ENCODE measurements at regions of chr13 and their contacts with region 1.

Region 1: GRCh38 chr13:45310341-45311125 is 30.4 kb downstream of the TPT1 start:
- DNase-seq: no peak
- ATAC-seq: no peak
- H3K4me3 ChIP-seq: peak overlapping the region; percentile 39 to 56 (median 44)
- H3K27ac ChIP-seq: no peak overlapping the region
- H3K4me1 ChIP-seq: peaks cover 4 to 10% of the 10 kb centered on the region in 2 donors
- H3K27me3 ChIP-seq: no peaks in the 10 kb centered on the region
- CTCF ChIP-seq: no peak
- POLR2A ChIP-seq: no peak

Region 2: DNA sequence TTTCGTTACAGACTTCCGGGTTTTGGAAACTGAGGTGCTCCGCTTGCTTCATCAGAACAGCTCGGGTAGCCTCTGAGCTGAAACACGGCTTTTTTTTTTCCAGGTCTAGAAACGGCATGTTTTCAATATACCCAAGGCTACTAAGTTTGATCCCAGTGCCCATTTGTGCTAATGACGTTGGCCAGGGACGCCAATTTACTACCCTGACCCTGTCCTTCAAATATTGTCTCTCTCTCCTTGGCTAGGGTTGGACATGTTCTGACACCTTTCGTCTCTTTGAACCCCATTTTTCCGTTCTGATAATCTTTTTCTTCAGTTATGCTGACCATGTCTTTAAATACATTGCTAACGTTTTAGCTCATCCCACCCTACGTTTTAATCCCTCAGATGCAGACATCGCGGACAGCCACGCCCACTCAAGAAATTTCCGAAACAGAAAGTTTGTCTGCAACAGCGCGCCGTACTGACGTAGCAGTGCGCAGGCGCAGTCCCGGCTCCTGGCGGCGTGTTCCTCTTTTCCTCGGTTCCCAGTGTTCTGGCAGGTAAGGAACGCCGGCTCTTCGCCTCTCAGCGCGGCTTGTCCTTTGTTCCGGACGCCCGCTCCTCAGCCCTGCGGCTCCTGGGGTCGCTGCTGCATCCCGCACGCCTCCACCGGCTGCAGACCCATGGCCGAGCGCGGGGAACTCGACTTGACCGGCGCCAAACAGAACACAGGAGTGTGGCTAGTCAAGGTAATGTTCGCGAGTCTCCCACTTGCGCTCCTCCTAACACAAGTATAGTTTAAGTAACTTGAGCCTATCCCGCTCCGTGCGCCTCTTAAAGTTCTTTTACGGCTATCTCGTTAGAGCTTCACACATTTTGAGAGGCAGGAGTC is 190.3 kb before region 1 on chr13 and contains the start of gene GTF2F2:
- in situ Hi-C with region 1: no loop called
- intact Hi-C with region 1: loop called (anchors 5 kb)
- DNase-seq: peak; percentile 73 to 84
- ATAC-seq: peak; percentile 93 to 95
- H3K4me3 ChIP-seq: peak within 1 kb of the TSS; percentile 58 to 87 (median 82)
- H3K27ac ChIP-seq: peak within 1 kb of the TSS; percentile 84 to 92 (median 86)
- H3K4me1 ChIP-seq: peaks cover 18 to 19% of the 10 kb centered on the region in 2 donors
- H3K27me3 ChIP-seq: no peaks in the 10 kb centered on the region
- CTCF ChIP-seq: peak in 1 of 5 experiments; percentile 21
- POLR2A ChIP-seq: peak; percentile 39 to 41
- total RNA-seq, gene GTF2F2: 11.5 to 16.9 (median 13.3) TPM

Region 3: GRCh38 chr13:45206340-45206739 is 104.2 kb before region 1 on chr13:
- in situ Hi-C with region 1: no loop called
- intact Hi-C with region 1: loop called (anchors 5 kb)
- DNase-seq: no peak
- ATAC-seq: peak in 1 of 2 donors; percentile 20
- H3K4me3 ChIP-seq: no peak overlapping the region
- H3K27ac ChIP-seq: peak overlapping the region; percentile 69 to 79 (median 72)
- H3K4me1 ChIP-seq: peaks cover 14 to 21% of the 10 kb centered on the region in 2 donors
- H3K27me3 ChIP-seq: no peaks in the 10 kb centered on the region
- CTCF ChIP-seq: no peak
- POLR2A ChIP-seq: no peak

Measured in gastrocnemius medialis (tissue), 4 donors.